Dorsolateral prefrontal cortex (tissue), 120 donors: ENCODE measurements at regions of chr20 and their contacts with region 1.

Region 1: GRCh38 chr20:53915446-53916172 is 154.8 kb downstream of the BCAS1 start:
- DNase-seq: peak; percentile 64 to 97 (median 92)
- H3K4me3 ChIP-seq: peak overlapping the region; percentile 50 to 94 (median 73)
- H3K27ac ChIP-seq: peak overlapping the region; percentile 58 to 97 (median 91)
- H3K27me3 ChIP-seq: no peaks in the 10 kb centered on the region
- CTCF ChIP-seq: peak; percentile 80 to 96 (median 88)

Region 2: GRCh38 chr20:53594068-53595017 is 321.3 kb before region 1 on chr20:
- intact Hi-C with region 1: loop called in 1 of 2 experiments (anchors 5 kb)
- DNase-seq: peak; percentile 90 to 97 (median 94)
- H3K4me3 ChIP-seq: peak overlapping the region; percentile 45 to 91 (median 77)
- H3K27ac ChIP-seq: peak overlapping the region; percentile 66 to 98 (median 94)
- H3K27me3 ChIP-seq: no peaks in the 10 kb centered on the region
- CTCF ChIP-seq: peak in 45 of 56 donors; percentile 13 to 59 (median 35)

Region 3: DNA sequence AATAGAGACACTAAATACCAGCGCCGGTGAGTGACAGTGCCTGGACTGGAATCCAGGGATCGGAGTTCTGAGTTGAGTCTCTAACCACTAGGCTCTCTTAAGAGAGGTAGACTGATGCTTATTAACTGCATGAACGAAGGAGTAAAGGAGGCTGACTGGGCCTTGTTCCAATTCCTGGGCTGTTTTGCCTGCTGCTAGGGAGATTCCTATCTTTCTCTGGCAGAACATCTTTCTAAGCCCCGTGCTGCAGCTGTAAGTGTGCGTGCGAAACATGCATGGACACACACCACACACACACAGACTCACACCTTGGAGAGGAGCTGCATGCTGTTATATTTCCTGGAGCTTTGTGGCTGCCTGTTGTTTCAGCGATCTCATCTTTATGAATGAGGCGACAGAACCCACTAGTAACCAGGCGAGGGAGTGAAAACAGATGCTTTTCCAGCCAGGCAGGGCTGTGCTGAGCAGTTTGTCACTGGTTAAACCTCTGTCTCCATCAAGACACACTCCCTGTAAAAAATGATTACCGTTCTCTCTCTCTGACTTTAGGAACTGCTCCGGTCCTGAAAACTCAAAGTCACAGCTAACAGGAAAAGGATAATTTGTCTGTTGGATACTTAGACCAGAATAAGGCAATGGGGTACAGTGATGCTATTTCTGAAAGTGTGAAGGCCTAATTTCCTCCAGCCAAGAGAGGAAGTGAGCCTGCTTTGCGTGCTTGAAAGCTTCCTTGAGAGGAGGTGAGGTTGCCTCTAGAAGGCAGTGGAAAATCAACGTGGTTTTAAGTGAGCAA is 164.6 kb before region 1 on chr20:
- intact Hi-C with region 1: loop called in 1 of 2 experiments (anchors 10 kb)
- DNase-seq: peak in 3 of 10 donors; percentile 32 to 49 (median 39)
- H3K4me3 ChIP-seq: peak overlapping the region in 14 of 59 donors; percentile 0 to 39 (median 15)
- H3K27ac ChIP-seq: peak overlapping the region in 20 of 59 donors; percentile 0 to 54 (median 20)
- H3K27me3 ChIP-seq: no peaks in the 10 kb centered on the region
- CTCF ChIP-seq: no peak

Region 4: DNA sequence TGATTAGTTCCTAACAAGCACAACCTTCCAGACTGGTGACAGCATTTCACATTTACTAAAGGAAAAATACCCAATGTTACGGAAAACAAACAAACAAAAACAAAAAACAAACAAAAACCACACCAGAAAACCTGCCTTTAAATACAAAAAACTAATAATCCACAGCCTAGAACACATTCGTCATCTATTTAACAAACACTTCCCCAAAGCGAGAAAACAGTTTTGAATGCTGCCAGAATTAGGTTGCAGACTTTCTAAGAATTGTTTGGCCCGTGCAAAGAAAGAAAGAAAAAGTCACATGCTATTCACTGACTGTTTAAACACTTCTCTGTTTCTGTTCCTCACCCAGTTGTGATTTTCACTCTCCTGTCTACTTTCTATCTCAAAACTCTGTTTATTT is 102.2 kb after region 1 on chr20:
- intact Hi-C with region 1: no loop called
- DNase-seq: no peak
- H3K4me3 ChIP-seq: peak overlapping the region in 8 of 59 donors; percentile 0 to 30 (median 12)
- H3K27ac ChIP-seq: peak overlapping the region in 33 of 59 donors; percentile 3 to 90 (median 32)
- H3K27me3 ChIP-seq: no peaks in the 10 kb centered on the region
- CTCF ChIP-seq: peak in 2 of 56 donors; percentile 2 to 14

Region 5: GRCh38 chr20:54062812-54063280 is 147.2 kb after region 1 on chr20:
- intact Hi-C with region 1: loop called (anchors 5 kb)
- DNase-seq: no peak
- H3K4me3 ChIP-seq: no peak overlapping the region
- H3K27ac ChIP-seq: peak overlapping the region in 1 of 59 donors; percentile 36
- H3K27me3 ChIP-seq: peaks cover 0 to 4% (median 0%) of the 10 kb centered on the region in 45 donors
- CTCF ChIP-seq: peak; percentile 29 to 86 (median 75)